Prostate gland (tissue), 2 donors: ENCODE measurements at regions of chr15 and their contacts with region 1.

Region 1: DNA sequence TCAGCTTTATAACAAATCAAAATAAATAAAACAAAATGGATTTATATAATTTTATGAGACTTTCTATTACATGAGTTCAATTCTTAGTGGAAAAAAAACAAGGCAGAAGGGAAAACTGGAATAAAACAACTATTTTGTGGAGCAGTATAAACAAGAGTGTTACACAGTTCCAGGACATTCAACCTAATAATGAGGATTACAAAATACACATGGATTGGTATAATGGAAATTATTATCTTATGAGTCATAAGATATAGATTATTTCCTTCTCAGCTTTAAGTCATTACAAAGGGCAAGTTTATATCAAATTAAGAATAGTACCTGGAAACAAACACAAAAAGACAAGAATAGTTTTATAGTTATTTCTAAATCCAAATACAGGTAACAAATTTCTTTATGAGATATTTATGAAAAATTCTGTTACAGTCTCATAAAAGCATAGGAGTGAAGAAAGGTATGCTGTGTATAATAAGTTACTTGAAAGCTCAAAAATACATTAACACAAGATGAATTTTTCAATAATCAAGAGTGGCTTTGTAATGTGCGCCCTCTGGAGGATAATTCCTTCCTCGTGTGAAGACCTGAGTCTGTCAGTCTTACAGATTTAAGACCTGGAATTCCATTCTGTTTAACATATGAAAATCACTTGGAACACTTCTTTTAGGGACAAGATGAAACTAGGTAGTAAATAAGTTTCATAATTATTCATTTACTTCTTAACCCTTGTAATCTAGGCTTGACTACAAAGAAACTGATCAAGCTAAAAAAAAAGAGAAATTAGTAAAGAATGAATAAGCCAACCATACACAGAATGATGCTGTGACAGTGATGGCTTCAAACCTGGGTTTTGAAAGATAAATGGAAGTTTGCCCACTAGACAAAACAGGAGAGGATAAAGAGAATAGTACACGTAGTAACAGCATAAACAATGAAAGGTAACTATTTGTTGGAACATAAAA is 9.5 kb downstream of the COPS2 start:
- DNase-seq: peak; percentile 30
- H3K4me3 ChIP-seq: no peak overlapping the region
- H3K27ac ChIP-seq: no peak overlapping the region
- H3K4me1 ChIP-seq: no peaks in the 10 kb centered on the region
- H3K27me3 ChIP-seq: no peaks in the 10 kb centered on the region
- CTCF ChIP-seq: peak; percentile 16 to 65 (median 54)
- POLR2A ChIP-seq: no peak

Region 2: GRCh38 chr15:48861813-48862431 is 284.0 kb before region 1 on chr15:
- intact Hi-C with region 1: loop called (anchors 10 kb)
- DNase-seq: no peak
- H3K4me3 ChIP-seq: no peak overlapping the region
- H3K27ac ChIP-seq: no peak overlapping the region
- H3K4me1 ChIP-seq: no peaks in the 10 kb centered on the region
- H3K27me3 ChIP-seq: no peaks in the 10 kb centered on the region
- CTCF ChIP-seq: peak; percentile 75 to 86 (median 82)
- POLR2A ChIP-seq: no peak

Region 3: DNA sequence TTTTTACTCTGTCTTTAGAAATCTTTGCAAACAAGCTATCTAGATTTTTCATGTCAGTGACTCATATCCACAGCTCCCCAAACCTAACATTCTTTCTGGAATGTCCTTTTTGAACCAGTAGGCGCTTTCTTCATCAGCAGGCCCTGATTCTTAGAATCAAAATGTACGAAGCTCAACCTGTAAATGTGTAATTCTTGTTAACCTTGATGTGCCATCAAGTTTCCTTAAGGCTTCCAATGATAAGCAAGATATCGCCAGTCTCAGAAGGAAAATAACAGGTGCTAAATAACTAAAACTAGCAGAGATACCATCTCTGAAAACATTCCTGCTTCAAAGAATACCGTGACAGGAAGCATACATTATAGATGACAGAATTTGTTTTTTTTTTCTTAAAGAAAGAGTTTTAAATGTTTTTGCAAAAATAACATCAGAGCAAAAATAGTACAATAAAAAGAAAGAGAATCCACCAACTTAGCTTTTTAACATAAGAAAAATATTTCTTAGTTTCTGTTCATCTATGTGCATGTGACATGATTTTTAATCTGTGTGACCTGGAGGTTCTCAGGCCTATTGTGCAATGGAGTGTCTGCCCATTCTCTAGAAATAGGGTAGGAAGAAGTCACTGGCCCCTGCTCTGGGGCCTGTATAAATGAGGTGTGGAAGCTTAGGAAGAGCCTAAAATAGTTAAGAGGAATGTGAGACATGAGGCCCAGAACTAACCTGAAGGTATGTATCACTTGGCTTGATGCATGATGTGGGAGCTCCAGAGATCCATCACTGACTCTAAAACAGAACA is 85.0 kb before region 1 on chr15:
- intact Hi-C with region 1: no loop called
- DNase-seq: no peak
- H3K4me3 ChIP-seq: no peak overlapping the region
- H3K27ac ChIP-seq: no peak overlapping the region
- H3K4me1 ChIP-seq: no peaks in the 10 kb centered on the region
- H3K27me3 ChIP-seq: no peaks in the 10 kb centered on the region
- CTCF ChIP-seq: no peak
- POLR2A ChIP-seq: no peak

Region 4: DNA sequence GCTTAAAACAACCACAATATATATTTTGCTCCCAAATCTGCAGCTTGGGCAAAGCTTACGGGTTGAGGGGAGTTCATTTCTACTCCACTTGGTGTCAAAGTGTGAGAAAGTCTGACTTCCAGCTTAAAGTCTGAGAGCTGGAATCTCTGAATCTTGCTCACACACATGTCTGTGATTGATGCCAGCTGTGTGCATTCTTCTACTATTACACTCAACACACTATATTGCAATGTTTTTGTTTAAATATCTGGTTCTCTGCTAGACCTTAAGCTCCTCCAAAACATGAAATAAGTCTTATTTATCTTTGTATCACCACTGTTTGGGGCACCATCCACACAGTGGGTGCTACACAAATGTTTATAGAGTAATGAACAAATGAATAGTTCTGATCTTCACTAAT is 63.0 kb before region 1 on chr15:
- intact Hi-C with region 1: no loop called
- DNase-seq: no peak
- H3K4me3 ChIP-seq: no peak overlapping the region
- H3K27ac ChIP-seq: no peak overlapping the region
- H3K4me1 ChIP-seq: no peaks in the 10 kb centered on the region
- H3K27me3 ChIP-seq: no peaks in the 10 kb centered on the region
- CTCF ChIP-seq: no peak
- POLR2A ChIP-seq: no peak